Activated T-helper 1 cell treated with anti-CD3 and anti-CD28 coated beads, Interleukin-12 subunit alpha, Interleukin-12 subunit beta, Interleukin-2, Interleukin-4 antibody, amounts not matched to agents 30 ng/mL and 10 ng/mL and 1 ng/mL, durations not matched to agents 14 hours and 24 hours and 36 hours (primary cell): ENCODE measurements at regions of chr12 and their contacts with region 1.

Region 1: GRCh38 chr12:11906286-11906935 is 164.3 kb upstream of the BCL2L14 start:
- DNase-seq: no peak
- H3K4me3 Mint-ChIP-seq: peak overlapping the region; percentile 30
- H3K27ac Mint-ChIP-seq: peak overlapping the region; percentile 88
- H3K4me1 Mint-ChIP-seq: peaks cover 53% of the 10 kb centered on the region
- H3K27me3 Mint-ChIP-seq: no peaks in the 10 kb centered on the region

Region 2: GRCh38 chr12:11568155-11568761 is 338.2 kb before region 1 on chr12:
- intact Hi-C with region 1: no loop called
- DNase-seq: no peak
- H3K4me3 Mint-ChIP-seq: no peak overlapping the region
- H3K27ac Mint-ChIP-seq: no peak overlapping the region
- H3K4me1 Mint-ChIP-seq: no peaks in the 10 kb centered on the region
- H3K27me3 Mint-ChIP-seq: peaks cover 8% of the 10 kb centered on the region

Region 3: GRCh38 chr12:11702959-11703358 is 203.5 kb before region 1 on chr12:
- intact Hi-C with region 1: loop called (anchors 1 kb)
- DNase-seq: no peak
- H3K4me3 Mint-ChIP-seq: peak overlapping the region; percentile 8
- H3K27ac Mint-ChIP-seq: peak overlapping the region; percentile 78
- H3K4me1 Mint-ChIP-seq: peaks cover 60% of the 10 kb centered on the region
- H3K27me3 Mint-ChIP-seq: no peaks in the 10 kb centered on the region

Region 4: DNA sequence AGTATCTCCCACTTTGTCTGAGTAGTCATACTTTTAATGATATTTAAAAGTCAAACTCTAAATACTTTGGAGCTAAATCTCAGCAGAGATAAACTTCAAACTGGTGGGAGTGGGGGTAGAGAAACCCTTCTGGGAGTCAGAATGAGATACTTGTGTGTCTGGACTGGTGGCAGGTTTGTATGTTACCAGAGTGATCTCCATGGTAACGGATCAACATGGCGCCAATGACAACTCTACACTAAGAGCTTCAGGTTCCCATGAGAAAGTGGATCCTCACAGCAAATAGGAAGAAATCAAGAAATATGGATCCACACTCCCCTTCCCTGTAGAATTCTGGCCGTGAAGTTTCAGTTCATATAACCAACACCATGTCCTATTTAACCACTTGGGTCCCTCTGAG is 135.1 kb before region 1 on chr12:
- intact Hi-C with region 1: loop called (anchors 1 kb)
- DNase-seq: no peak
- H3K4me3 Mint-ChIP-seq: no peak overlapping the region
- H3K27ac Mint-ChIP-seq: peak overlapping the region; percentile 98
- H3K4me1 Mint-ChIP-seq: peaks cover 96% of the 10 kb centered on the region
- H3K27me3 Mint-ChIP-seq: no peaks in the 10 kb centered on the region

Region 5: GRCh38 chr12:11861155-11861863 is 45.1 kb before region 1 on chr12:
- intact Hi-C with region 1: loop called (anchors 2 kb)
- DNase-seq: no peak
- H3K4me3 Mint-ChIP-seq: no peak overlapping the region
- H3K27ac Mint-ChIP-seq: peak overlapping the region; percentile 81
- H3K4me1 Mint-ChIP-seq: peaks cover 82% of the 10 kb centered on the region
- H3K27me3 Mint-ChIP-seq: no peaks in the 10 kb centered on the region

Region 6: GRCh38 chr12:11981121-11981733 is 74.8 kb after region 1 on chr12:
- intact Hi-C with region 1: loop called (anchors 1 kb)
- DNase-seq: peak; percentile 73
- H3K4me3 Mint-ChIP-seq: peak overlapping the region; percentile 36
- H3K27ac Mint-ChIP-seq: peak overlapping the region; percentile 96
- H3K4me1 Mint-ChIP-seq: peaks cover 62% of the 10 kb centered on the region
- H3K27me3 Mint-ChIP-seq: no peaks in the 10 kb centered on the region